ENCODE measurements at regions of chr20 and their contacts with region 1.

Region 1: DNA sequence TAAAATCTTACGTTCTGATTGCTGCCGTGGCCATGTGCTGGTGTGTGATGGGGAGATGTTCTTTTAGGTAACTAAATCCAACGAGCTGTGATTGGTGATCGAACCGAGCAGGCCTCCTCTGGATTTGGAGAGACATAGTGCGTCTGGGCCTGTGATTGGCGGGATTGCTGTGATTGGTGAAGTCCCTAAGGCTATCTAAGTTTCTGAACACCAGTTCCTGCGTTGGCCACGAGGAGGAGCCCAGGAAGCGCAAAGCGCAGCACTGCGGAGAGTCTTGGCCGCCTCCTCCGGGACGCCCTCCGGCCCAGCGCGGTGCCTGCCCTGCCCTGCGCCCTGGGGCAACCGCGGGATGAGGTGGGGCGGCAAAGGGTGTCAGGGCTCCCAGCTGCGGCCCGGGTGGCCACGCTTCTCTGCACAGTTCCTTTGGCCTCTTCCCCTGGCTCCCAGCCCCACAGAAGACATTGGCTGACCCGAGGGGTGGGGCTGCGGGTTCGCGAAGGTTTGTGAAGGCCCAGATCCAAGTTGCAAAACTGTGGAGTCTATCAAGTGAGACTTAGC is 33.0 kb downstream of the HNF4A start:
- DNase-seq: peak; percentile 78
- H3K4me3 ChIP-seq: no peak overlapping the region
- H3K27ac ChIP-seq: no peak overlapping the region
- H3K4me1 ChIP-seq: peaks cover 13% of the 10 kb centered on the region
- H3K27me3 ChIP-seq: no peaks in the 10 kb centered on the region
- CTCF ChIP-seq: peak; percentile 92 to 96

Region 2: GRCh38 chr20:44115762-44116644 is 272.5 kb before region 1 on chr20:
- CTCF ChIA-PET with region 1: interaction called, 12 read pairs
- dilution Hi-C with region 1: loop called (anchors 5 kb)
- in situ Hi-C with region 1: no loop called
- intact Hi-C with region 1: loop called (anchors 1 kb)
- DNase-seq: no peak
- H3K4me3 ChIP-seq: no peak overlapping the region
- H3K27ac ChIP-seq: no peak overlapping the region
- H3K4me1 ChIP-seq: peaks cover 11% of the 10 kb centered on the region
- H3K27me3 ChIP-seq: no peaks in the 10 kb centered on the region
- CTCF ChIP-seq: no peak

Region 3: DNA sequence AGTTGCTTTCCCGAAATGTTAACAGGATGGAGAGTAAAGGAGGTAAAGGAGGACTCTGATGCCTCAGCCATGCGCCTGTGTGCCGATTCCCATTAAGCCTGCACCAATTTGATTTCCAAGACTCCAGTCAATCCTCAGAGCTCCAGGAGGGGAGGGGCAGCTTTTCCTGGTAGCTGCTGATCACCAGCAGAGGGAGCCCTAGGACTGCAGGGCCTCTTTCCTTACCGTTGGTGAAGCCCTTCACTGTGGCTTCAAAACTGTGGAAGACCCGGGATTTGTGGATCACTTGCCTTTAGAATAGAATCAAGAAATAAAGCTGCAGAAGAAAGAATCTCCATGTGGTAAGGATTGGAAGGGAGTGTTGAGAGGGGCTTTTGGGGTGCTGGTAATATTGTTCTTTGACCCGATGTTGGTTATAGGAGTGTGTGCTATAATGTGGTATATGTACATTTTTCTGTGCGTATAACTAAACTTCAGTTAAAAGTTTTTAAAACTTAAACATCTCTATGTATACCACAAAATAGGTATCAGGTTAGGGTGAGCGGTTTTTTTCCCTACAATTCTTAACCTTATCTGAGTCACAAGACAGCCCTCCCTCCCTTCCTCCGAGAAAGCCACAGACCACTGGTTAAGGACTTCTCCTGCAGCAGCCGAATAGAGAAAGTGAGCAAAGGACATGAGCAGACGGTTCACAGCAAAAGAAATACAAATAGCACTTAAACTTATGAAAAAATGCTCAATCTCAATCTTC is 171.0 kb before region 1 on chr20:
- CTCF ChIA-PET with region 1: interaction called, 11 read pairs
- dilution Hi-C with region 1: no loop called
- in situ Hi-C with region 1: loop called (anchors 5 kb)
- intact Hi-C with region 1: loop called (anchors 1 kb)
- DNase-seq: peak; percentile 52
- H3K4me3 ChIP-seq: no peak overlapping the region
- H3K27ac ChIP-seq: no peak overlapping the region
- H3K4me1 ChIP-seq: peaks cover 7% of the 10 kb centered on the region
- H3K27me3 ChIP-seq: no peaks in the 10 kb centered on the region
- CTCF ChIP-seq: peak; percentile 96 to 99

Region 4: GRCh38 chr20:44370639-44371220 is 17.8 kb before region 1 on chr20:
- CTCF ChIA-PET with region 1: no interaction called
- dilution Hi-C with region 1: no loop called
- in situ Hi-C with region 1: no loop called
- intact Hi-C with region 1: no loop called
- DNase-seq: no peak
- H3K4me3 ChIP-seq: no peak overlapping the region
- H3K27ac ChIP-seq: no peak overlapping the region
- H3K4me1 ChIP-seq: no peaks in the 10 kb centered on the region
- H3K27me3 ChIP-seq: peaks cover 4% of the 10 kb centered on the region
- CTCF ChIP-seq: no peak

Region 5: DNA sequence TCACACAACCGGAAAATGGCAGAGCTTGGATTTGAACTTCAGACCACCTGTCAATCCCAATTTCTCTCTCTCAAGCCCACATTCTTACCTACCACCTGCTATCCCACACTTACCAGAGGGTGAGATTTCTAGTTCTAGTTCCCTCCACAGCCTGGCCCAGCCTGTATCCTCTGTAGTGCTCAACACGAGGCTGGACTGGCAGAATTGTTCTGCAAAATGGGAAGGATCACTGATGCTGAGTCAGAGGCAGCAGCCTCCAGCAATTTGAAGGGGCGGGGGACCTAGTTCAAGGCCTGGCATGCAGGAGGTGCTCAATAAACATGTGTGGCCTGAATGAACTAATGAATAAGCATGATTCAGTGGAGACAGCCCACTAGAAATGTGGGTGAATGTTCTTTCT is 33.5 kb after region 1 on chr20:
- CTCF ChIA-PET with region 1: no interaction called
- dilution Hi-C with region 1: no loop called
- in situ Hi-C with region 1: no loop called
- intact Hi-C with region 1: no loop called
- DNase-seq: peak; percentile 89
- H3K4me3 ChIP-seq: no peak overlapping the region
- H3K27ac ChIP-seq: no peak overlapping the region
- H3K4me1 ChIP-seq: peaks cover 10% of the 10 kb centered on the region
- H3K27me3 ChIP-seq: no peaks in the 10 kb centered on the region
- CTCF ChIP-seq: no peak

Region 6: DNA sequence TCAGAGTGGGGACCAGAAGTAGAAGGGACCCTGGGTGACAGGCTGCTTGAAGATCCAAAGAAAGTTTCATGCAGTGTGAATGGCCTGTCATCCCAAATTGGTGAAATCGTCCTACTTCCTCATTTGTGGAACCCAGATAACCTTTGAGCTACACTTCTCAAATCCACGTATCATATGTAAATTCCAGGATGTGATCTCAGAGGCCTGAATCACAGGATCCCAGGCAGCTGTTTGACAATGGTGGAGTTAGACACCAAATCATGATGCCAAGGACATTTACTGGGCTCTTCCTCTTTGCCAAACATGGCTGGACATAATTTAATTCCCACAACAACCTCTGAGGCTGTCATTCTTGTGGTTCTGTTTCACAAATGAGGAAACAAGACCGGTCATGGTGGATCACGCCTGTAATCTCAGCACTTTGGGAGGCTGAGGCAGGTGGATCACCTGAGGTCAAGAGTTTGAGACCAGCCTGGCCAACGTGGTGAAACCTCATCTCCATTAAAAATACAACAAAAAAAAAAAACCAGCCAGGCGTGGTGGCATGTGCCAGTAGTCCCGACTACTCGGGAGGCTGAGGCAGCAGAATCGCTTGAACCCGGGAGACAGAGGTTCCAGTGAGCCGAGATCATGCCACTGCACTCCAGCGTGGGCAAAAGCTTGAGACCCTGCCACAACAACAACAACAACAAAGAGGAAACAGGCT is 47.2 kb after region 1 on chr20:
- CTCF ChIA-PET with region 1: no interaction called
- dilution Hi-C with region 1: loop called (anchors 10 kb)
- in situ Hi-C with region 1: no loop called
- intact Hi-C with region 1: no loop called
- DNase-seq: no peak
- H3K4me3 ChIP-seq: no peak overlapping the region
- H3K27ac ChIP-seq: no peak overlapping the region
- H3K4me1 ChIP-seq: no peaks in the 10 kb centered on the region
- H3K27me3 ChIP-seq: no peaks in the 10 kb centered on the region
- CTCF ChIP-seq: no peak

Region 7: GRCh38 chr20:44475694-44476560 is 87.4 kb after region 1 on chr20 and contains the start of gene TTPAL:
- CTCF ChIA-PET with region 1: no interaction called
- dilution Hi-C with region 1: no loop called
- in situ Hi-C with region 1: no loop called
- intact Hi-C with region 1: loop called (anchors 1 kb)
- DNase-seq: peak; percentile 88
- H3K4me3 ChIP-seq: peak within 1 kb of the TSS; percentile 73 to 94 (median 78)
- H3K27ac ChIP-seq: peak within 1 kb of the TSS; percentile 86
- H3K4me1 ChIP-seq: peaks cover 18% of the 10 kb centered on the region
- H3K27me3 ChIP-seq: no peaks in the 10 kb centered on the region
- CTCF ChIP-seq: peak in 1 of 2 donors; percentile 56
- total RNA-seq, gene TTPAL: 59.0 TPM

Region 8: DNA sequence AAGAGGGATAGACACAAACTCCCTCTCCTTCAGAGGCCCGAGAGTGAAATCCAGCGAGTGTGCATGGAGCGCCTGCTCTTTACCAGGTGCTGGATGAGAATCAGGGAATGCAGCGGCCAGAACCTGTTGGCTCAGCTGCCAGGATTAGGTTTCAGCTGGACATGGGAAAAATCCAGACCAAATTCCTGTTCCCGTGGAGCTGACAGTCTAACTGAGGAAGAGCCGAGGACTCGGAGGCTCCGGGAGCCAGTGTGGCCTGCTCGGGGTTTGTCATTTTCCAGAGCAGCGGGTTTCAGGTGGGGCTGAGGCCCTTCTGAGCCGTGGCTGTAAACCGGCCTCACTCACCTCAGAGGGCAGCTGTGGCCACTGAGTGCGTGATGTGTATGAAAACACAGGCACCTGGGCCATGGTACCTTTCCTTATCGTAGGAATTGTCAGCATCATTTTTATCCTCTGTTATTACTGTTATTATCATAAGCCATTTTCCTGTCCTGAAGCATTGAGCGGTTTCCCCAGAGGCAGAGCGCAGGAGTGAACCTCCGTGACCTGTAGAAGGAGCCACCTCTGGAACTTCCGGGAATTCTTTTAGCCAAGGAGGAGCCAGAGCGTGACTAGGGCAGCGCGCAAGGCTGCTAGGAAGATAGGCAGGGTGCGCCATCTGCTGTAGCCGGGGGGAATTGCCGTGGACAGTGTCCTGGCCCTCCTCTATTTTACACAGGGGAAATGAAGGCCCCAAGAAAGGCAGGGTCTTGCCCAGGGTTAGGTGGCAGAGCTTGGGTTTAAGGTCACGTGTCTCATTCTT is 221.2 kb after region 1 on chr20:
- CTCF ChIA-PET with region 1: no interaction called
- dilution Hi-C with region 1: no loop called
- in situ Hi-C with region 1: loop called (anchors 10 kb)
- intact Hi-C with region 1: loop called (anchors 1 kb)
- DNase-seq: peak; percentile 83
- H3K4me3 ChIP-seq: peak overlapping the region in 1 of 3 experiments; percentile 38
- H3K27ac ChIP-seq: peak overlapping the region; percentile 79
- H3K4me1 ChIP-seq: peaks cover 17% of the 10 kb centered on the region
- H3K27me3 ChIP-seq: no peaks in the 10 kb centered on the region
- CTCF ChIP-seq: peak; percentile 99 to 100

Region 9: GRCh38 chr20:44733341-44734069 is 345.0 kb after region 1 on chr20:
- CTCF ChIA-PET with region 1: no interaction called
- dilution Hi-C with region 1: no loop called
- in situ Hi-C with region 1: no loop called
- intact Hi-C with region 1: loop called (anchors 5 kb)
- DNase-seq: peak; percentile 57
- H3K4me3 ChIP-seq: no peak overlapping the region
- H3K27ac ChIP-seq: no peak overlapping the region
- H3K4me1 ChIP-seq: peaks cover 32% of the 10 kb centered on the region
- H3K27me3 ChIP-seq: no peaks in the 10 kb centered on the region
- CTCF ChIP-seq: peak; percentile 88 to 92

Measured in mammary epithelial cell (primary cell).